ENCODE measurements at regions of chr1 and their contacts with region 1.

Region 1: GRCh38 chr1:89632657-89633247 is at the start of gene LRRC8C:
- DNase-seq: peak; percentile 78 to 90 (median 87)
- H3K4me3 ChIP-seq: peak within 1 kb of the TSS; percentile 79
- H3K27ac ChIP-seq: peak within 1 kb of the TSS; percentile 40 to 95
- H3K4me1 ChIP-seq: no peaks in the 10 kb centered on the region
- H3K27me3 ChIP-seq: no peaks in the 10 kb centered on the region
- CTCF ChIP-seq: peak; percentile 10 to 76 (median 67)
- EP300 ChIP-seq: no peak
- POLR2A ChIP-seq: peak; percentile 40
- total RNA-seq, gene LRRC8C: 5.7 to 9.2 (median 7.2) TPM

Region 2: DNA sequence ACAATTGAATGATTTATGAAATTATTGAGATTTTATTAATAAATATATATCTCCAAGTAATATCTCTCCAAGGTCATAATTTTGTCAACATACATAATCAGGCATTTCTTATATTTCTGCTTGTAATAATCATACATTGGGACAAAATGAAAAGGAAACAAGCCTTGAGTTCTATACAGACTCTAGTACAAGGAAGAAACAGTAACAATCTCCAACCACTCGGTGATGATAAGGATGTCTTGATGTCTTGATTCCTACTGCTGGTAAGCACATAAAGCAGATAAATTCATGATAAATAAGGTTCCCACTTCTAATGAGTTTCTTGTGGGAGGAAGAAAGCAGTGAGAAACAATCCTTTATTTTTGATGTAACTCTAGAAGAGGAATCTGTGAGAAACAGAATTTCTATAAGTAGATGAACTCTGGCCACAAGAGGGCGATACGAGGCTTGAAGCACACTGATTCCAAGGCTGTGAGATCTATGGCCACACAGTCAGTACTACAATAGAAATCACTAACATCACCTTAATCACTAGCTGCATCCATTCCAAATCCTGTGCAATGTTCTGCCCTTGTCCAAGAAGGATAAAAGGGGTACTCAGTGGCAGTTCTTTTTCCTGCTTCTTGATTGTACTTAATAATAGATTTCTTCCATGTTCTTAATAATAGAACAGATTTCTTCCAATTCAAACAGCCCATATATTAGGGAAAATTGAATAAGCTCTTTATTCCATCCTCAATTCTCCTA is 149.6 kb before region 1 on chr1:
- intact Hi-C with region 1: loop called in 1 of 4 experiments (anchors 10 kb)
- DNase-seq: peak; percentile 62 to 84 (median 70)
- H3K4me3 ChIP-seq: no peak overlapping the region
- H3K27ac ChIP-seq: no peak overlapping the region
- H3K4me1 ChIP-seq: no peaks in the 10 kb centered on the region
- H3K27me3 ChIP-seq: no peaks in the 10 kb centered on the region
- CTCF ChIP-seq: peak; percentile 49 to 71 (median 61)
- EP300 ChIP-seq: no peak
- POLR2A ChIP-seq: no peak

Region 3: GRCh38 chr1:89598450-89599331 is 34.1 kb before region 1 on chr1:
- intact Hi-C with region 1: loop called in 1 of 4 experiments (anchors 5 kb)
- DNase-seq: no peak
- H3K4me3 ChIP-seq: no peak overlapping the region
- H3K27ac ChIP-seq: no peak overlapping the region
- H3K4me1 ChIP-seq: peaks cover 4% of the 10 kb centered on the region
- H3K27me3 ChIP-seq: no peaks in the 10 kb centered on the region
- CTCF ChIP-seq: peak; percentile 22 to 44 (median 27)
- EP300 ChIP-seq: no peak
- POLR2A ChIP-seq: no peak

Region 4: GRCh38 chr1:89762779-89763648 is 130.3 kb after region 1 on chr1:
- intact Hi-C with region 1: loop called (anchors 5 to 10 kb)
- DNase-seq: peak; percentile 74 to 88 (median 85)
- H3K4me3 ChIP-seq: peak overlapping the region; percentile 43
- H3K27ac ChIP-seq: no peak overlapping the region
- H3K4me1 ChIP-seq: no peaks in the 10 kb centered on the region
- H3K27me3 ChIP-seq: no peaks in the 10 kb centered on the region
- CTCF ChIP-seq: peak; percentile 88 to 90 (median 89)
- EP300 ChIP-seq: no peak
- POLR2A ChIP-seq: no peak

Region 5: DNA sequence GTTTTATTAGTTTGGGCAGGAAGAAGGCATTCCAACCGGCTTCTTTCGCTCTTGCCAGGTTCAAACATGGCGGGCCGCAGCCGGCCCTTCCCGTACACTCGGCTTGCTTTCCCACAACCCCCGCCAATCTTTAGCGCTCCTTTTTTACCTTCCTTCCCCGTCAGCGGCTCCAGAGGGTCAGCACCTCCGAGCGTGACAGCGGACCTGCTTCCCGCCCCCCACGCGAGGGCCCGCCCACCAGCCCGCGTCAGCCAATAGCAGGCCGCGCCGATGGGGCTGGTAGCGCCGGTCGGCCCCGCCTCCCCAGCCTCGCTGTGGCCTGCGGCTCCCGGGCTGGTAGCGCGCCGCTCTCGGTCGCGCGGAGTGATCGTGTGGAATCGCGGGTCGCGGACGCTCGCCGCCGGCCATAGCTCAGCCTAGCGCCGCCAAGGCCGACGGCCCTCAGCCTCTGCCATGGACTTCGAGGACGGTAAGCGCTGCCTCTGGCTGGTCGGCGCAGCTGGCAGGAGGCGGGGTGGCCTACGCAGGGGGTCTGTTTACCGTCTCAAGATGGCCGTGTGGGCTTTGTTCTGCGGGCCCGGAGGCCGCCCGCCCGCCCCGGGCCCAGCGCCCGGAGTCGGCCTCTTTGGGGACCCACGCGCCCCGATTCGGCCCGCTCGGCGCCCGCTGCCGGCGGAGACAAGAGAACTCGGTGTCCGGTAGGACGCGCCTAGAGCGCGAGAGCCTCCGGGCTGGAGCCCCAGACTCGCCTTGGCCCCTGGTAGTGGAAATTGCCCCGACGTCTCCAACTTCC is 362.2 kb after region 1 on chr1 and contains the start of gene ZNF326:
- intact Hi-C with region 1: loop called in 1 of 4 experiments (anchors 10 kb)
- DNase-seq: peak; percentile 95 to 98 (median 97)
- H3K4me3 ChIP-seq: peak within 1 kb of the TSS; percentile 79
- H3K27ac ChIP-seq: peak within 1 kb of the TSS; percentile 94 to 96
- H3K4me1 ChIP-seq: peaks cover 1% of the 10 kb centered on the region
- H3K27me3 ChIP-seq: no peaks in the 10 kb centered on the region
- CTCF ChIP-seq: no peak
- EP300 ChIP-seq: no peak
- POLR2A ChIP-seq: peak; percentile 97
- total RNA-seq, gene ZNF326: 17.1 to 24.7 (median 21.8) TPM

Measured in ovary (tissue), 10 donors.